ENCODE measurements at regions of chr2 and their contacts with region 1.

Region 1: GRCh38 chr2:73085691-73086360 is 14.3 kb upstream of the SFXN5 start:
- DNase-seq: peak; percentile 72
- H3K4me3 Mint-ChIP-seq: no peak overlapping the region
- H3K27ac Mint-ChIP-seq: no peak overlapping the region
- H3K4me1 Mint-ChIP-seq: peaks cover 24% of the 10 kb centered on the region
- H3K27me3 Mint-ChIP-seq: no peaks in the 10 kb centered on the region
- CTCF ChIP-seq: peak; percentile 89

Region 2: DNA sequence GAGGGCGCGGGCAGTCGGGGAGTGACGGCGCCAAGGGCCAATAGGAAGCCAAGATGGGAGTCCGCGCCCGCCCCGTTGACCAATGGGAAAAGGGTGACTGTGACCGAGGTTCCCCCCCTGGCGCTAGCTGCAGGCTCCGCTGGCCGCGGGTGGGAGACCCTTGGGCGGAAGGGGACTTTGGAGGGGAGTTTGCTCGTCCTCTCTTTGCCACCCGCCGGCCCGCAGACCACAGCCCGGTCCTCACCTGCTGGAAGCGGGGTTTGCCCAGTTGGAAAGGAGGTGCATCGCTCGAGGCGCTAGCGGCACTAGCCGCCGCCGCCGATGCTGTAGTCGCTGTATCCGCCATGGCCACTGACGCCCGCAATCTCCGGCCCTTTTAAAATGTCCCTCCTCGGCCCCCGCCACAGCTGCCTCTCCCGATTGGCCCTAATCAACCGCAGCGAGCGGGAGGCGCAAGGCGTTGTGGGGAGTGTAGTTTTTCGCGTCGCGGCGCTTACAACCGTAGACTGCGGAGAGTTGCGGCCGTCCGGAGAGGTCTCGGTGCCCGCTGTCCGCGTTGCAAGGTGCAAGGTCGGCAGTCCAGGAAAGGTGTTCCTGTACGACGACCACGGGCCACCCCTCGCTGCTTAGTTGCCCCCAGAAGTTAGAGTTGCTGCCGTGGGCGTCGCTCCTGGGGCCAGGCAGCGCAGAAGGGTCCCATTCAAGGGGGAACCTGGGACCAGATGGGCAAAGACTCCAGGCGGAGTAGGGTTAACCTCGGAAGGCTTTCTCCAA is 14.3 kb before region 1 on chr2 and contains the start of gene SFXN5:
- CTCF ChIA-PET with region 1: interaction called, 31 read pairs
- POLR2A ChIA-PET with region 1: interaction called, 3 read pairs
- intact Hi-C with region 1: no loop called
- DNase-seq: peak; percentile 97
- H3K4me3 Mint-ChIP-seq: peak within 1 kb of the TSS; percentile 88
- H3K27ac Mint-ChIP-seq: peak within 1 kb of the TSS; percentile 88
- H3K4me1 Mint-ChIP-seq: peaks cover 34% of the 10 kb centered on the region
- H3K27me3 Mint-ChIP-seq: no peaks in the 10 kb centered on the region
- CTCF ChIP-seq: no peak
- total RNA-seq, gene SFXN5: 6.0 and 8.0 TPM in 2 replicates

Region 3: GRCh38 chr2:73107211-73107926 is 21.5 kb after region 1 on chr2:
- CTCF ChIA-PET with region 1: interaction called, 51 read pairs
- POLR2A ChIA-PET with region 1: interaction called, 28 read pairs
- intact Hi-C with region 1: no loop called
- DNase-seq: no peak
- H3K4me3 Mint-ChIP-seq: no peak overlapping the region
- H3K27ac Mint-ChIP-seq: peak overlapping the region; percentile 49
- H3K4me1 Mint-ChIP-seq: peaks cover 45% of the 10 kb centered on the region
- H3K27me3 Mint-ChIP-seq: no peaks in the 10 kb centered on the region
- CTCF ChIP-seq: no peak

Region 4: GRCh38 chr2:73156539-73157124 is 70.8 kb after region 1 on chr2:
- CTCF ChIA-PET with region 1: interaction called, 92 read pairs
- POLR2A ChIA-PET with region 1: no interaction called
- intact Hi-C with region 1: loop called (anchors 1 kb)
- DNase-seq: peak; percentile 51
- H3K4me3 Mint-ChIP-seq: no peak overlapping the region
- H3K27ac Mint-ChIP-seq: no peak overlapping the region
- H3K4me1 Mint-ChIP-seq: peaks cover 5% of the 10 kb centered on the region
- H3K27me3 Mint-ChIP-seq: peaks cover 28% of the 10 kb centered on the region
- CTCF ChIP-seq: peak; percentile 64

Region 5: GRCh38 chr2:73176881-73177644 is 91.2 kb after region 1 on chr2:
- CTCF ChIA-PET with region 1: interaction called, 25 read pairs
- POLR2A ChIA-PET with region 1: no interaction called
- intact Hi-C with region 1: loop called (anchors 5 kb)
- DNase-seq: peak; percentile 78
- H3K4me3 Mint-ChIP-seq: peak overlapping the region; percentile 86
- H3K27ac Mint-ChIP-seq: no peak overlapping the region
- H3K4me1 Mint-ChIP-seq: peaks cover 9% of the 10 kb centered on the region
- H3K27me3 Mint-ChIP-seq: peaks cover 48% of the 10 kb centered on the region
- CTCF ChIP-seq: peak; percentile 97

Region 6: DNA sequence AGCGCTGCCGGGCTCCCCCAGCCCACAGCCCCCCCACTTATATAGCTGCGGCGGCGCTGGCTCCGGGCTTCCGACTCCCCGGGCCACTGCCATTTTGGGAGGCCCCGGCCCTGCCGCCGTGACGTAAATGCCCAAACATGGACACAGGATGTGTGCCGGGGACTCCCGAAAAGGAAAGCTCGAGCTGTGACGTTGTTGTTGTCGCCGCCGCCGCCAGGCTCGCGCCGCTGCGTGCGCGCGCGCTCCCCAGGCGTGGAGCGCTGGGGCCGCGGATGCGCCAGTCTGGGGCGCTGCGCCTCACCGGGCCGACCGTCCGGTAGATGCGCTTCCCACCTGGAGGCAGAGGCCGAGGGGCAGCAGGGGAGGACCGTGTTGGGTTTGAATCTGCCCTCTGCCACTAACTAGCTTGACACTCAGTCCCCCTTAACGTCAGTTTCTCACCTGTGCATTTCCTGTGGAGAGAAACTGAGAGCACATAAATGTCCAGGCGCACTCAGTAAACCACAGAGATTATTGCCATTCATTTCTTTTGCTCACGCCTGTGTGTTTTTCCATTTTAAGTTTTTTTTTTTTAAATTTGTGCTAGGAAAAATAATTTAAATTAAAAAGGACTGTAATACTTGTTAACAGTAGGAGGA is 207.8 kb after region 1 on chr2 and contains the start of gene EGR4:
- CTCF ChIA-PET with region 1: no interaction called
- POLR2A ChIA-PET with region 1: no interaction called
- intact Hi-C with region 1: no loop called
- DNase-seq: peak; percentile 75
- H3K4me3 Mint-ChIP-seq: peak within 1 kb of the TSS; percentile 70
- H3K27ac Mint-ChIP-seq: peak within 1 kb of the TSS; percentile 31
- H3K4me1 Mint-ChIP-seq: peaks cover 22% of the 10 kb centered on the region
- H3K27me3 Mint-ChIP-seq: peaks cover 20% of the 10 kb centered on the region
- CTCF ChIP-seq: no peak
- total RNA-seq, gene EGR4: 0.22 and 0.37 TPM in 2 replicates

Measured in MCF 10A (cell line).